GM13977 (cell line): ENCODE measurements at regions of chr2 and their contacts with region 1.

Region 1: DNA sequence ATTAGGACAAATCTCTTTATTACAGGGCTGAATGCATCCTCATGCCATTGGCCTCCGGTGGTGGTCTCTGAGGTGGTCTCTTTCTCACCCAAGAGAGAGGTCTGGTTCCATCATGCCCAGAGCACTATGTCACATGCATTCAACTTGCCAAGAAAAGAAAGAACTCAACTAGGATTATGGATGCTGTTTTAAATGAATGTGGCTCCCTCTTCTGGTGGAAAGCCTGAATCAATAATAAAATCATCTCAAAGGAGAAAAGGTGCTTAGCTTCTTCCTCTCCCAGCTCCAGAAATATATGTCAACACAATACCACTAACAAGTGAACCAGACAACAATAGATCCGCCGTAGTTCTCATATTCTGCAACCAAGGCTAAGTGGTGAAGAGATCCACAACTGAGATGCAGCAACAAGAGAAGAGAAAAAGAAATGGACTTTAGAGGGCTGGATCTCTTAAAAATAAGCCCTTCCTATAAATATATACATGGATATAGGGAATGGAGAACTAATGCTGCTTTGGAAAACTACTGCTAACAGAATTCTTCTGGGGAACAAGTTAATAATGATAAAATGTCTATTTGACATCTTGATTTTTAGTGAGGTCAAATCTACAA is 396.8 kb downstream of the NCKAP5 start:
- DNase-seq: peak; percentile 22
- CTCF ChIP-seq: peak; percentile 58

Region 2: DNA sequence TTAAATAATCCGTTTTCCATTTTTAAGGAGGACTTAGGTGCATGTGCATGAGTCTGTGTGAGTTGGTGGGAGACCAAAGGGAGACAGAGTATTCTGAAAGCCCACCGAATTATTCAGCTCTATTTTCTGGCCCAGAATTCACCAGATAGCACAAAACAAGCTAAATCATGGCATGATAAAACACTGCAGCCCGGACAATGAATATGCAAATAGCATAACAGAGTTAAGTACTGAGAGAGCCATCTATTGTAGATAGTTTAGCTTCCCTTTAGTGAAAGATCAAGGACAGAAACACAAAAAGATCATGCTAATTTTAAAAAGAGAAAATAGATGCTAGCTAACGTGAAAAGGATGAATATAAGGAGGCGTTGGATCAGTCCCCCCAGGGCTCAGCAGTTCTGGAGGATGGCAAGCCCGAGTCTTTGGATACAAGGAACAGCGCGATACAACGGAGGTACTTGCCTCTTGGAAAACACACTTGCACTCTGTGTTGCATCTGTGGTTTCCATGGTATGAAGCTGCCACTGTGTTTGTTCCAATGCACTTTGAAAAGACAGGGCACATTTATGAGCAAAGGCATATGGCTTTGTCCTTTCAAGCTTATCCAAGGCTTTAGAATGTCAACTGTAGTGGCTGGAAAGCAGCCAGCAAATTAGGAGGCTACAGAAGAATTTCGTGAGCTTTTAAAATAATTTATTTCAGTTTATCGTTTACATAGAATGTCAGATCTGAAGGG is 621.4 kb before region 1 on chr2:
- in situ Hi-C with region 1: loop called (anchors 25 kb)
- DNase-seq: no peak
- CTCF ChIP-seq: no peak

Region 3: DNA sequence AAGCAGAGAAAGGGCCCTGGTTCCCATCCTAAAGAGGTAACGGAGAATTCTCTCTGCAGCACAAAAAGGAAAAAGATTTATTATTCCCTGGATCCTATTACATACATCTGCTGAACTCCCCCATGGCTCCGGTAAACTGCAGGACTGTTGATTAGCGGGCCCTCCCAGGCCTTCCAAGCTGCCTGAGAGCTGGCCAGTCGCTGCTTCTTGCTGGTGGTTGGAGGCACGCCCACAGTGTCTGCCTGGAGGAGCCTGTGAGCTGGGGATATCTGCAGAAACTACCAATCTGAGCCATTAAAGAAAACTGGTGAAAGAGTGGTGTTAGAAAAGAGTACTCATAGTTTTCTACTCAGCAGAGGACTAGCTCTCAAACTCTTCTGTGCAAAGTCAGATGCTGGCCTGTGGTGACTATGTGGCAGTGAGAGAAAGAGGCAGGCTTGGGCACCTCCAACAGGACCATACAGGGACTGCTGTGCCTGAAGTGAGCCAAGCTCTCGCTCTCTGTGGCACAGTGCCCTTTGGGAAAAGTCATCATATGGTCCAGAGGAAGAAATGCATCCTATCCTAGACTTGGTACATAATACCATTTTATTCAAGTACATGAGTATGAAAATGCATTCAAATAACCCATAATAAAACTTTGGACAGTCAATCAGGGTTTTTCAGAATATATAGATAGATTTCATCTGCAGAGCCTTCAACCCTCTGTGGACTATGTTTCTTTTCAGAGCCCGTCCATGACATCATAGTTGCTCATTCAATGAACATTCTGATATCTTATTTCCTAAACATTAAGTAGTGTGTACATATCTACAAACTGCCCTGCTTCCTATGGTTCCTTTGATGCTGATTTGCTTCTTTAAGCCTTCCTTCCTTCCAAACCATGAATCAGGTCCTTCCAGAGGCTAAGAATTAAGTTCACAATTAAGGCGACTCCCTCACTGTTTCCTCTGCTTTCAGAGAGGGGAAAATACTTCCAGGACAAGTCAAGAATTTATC is 259.5 kb before region 1 on chr2:
- in situ Hi-C with region 1: no loop called
- DNase-seq: no peak
- CTCF ChIP-seq: no peak